Natural killer cell (primary cell): ENCODE measurements at regions of chr7 and their contacts with region 1.

Region 1: GRCh38 chr7:16420649-16421332 is 547 bp downstream of the CRPPA start:
- DNase-seq: peak; percentile 75 to 95
- ATAC-seq: peak; percentile 89 to 93 (median 89)
- H3K4me3 ChIP-seq: peak overlapping the region; percentile 50
- H3K4me3 Mint-ChIP-seq: peak overlapping the region; percentile 92
- H3K27ac ChIP-seq: peak overlapping the region; percentile 77
- H3K27ac Mint-ChIP-seq: peak overlapping the region; percentile 85 to 91
- H3K4me1 ChIP-seq: peaks cover 15% of the 10 kb centered on the region
- H3K4me1 Mint-ChIP-seq: peaks cover 17 to 21% of the 10 kb centered on the region in 2 donors
- H3K27me3 ChIP-seq: no peaks in the 10 kb centered on the region
- H3K27me3 Mint-ChIP-seq: peaks cover 0 to under 1% of the 10 kb centered on the region in 2 donors
- CTCF ChIP-seq: peak; percentile 14

Region 2: GRCh38 chr7:16284581-16284980 is 136.2 kb before region 1 on chr7:
- intact Hi-C with region 1: no loop called
- DNase-seq: no peak
- ATAC-seq: no peak
- H3K4me3 ChIP-seq: no peak overlapping the region
- H3K4me3 Mint-ChIP-seq: no peak overlapping the region
- H3K27ac ChIP-seq: no peak overlapping the region
- H3K27ac Mint-ChIP-seq: no peak overlapping the region
- H3K4me1 ChIP-seq: no peaks in the 10 kb centered on the region
- H3K4me1 Mint-ChIP-seq: no peaks in the 10 kb centered on the region
- H3K27me3 ChIP-seq: no peaks in the 10 kb centered on the region
- H3K27me3 Mint-ChIP-seq: no peaks in the 10 kb centered on the region
- CTCF ChIP-seq: no peak

Region 3: DNA sequence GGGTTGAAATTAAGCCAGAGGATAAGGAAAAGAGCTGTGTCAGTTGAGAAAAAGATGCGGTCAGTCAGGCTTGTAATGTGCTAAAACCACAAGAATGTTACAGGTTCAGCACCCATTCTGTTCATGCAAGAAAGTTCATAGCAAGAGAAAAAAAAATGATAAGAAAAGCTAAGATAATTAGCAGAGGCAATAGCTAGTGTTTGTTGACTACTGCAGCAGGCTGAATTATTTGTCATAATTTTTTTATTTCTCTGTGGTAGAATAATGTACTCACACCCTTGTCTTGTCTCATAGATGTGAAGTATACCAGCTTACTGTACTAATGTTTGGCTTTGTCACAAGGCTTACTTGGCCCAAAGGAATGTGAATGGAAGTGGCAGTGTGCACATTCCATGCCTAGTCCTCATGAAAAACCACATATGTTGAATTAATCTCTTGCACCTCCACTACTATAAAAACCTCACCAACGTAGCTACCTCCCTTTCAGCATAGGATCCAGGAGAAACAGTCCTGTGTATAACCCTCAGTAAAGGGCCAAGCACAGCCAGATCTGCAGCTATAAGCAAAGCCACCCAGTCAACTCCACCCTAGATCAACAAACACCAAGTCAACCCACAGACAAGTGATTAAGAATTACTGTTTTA is 74.3 kb before region 1 on chr7:
- intact Hi-C with region 1: loop called (anchors 2 kb)
- DNase-seq: peak in 1 of 2 donors; percentile 44
- ATAC-seq: peak; percentile 78 to 89 (median 78)
- H3K4me3 ChIP-seq: no peak overlapping the region
- H3K4me3 Mint-ChIP-seq: peak overlapping the region; percentile 32
- H3K27ac ChIP-seq: no peak overlapping the region
- H3K27ac Mint-ChIP-seq: peak overlapping the region; percentile 0 to 5
- H3K4me1 ChIP-seq: peaks cover 8% of the 10 kb centered on the region
- H3K4me1 Mint-ChIP-seq: peaks cover 34 to 40% of the 10 kb centered on the region in 2 donors
- H3K27me3 ChIP-seq: no peaks in the 10 kb centered on the region
- H3K27me3 Mint-ChIP-seq: peaks cover 0 to 7% of the 10 kb centered on the region in 2 donors
- CTCF ChIP-seq: no peak

Region 4: DNA sequence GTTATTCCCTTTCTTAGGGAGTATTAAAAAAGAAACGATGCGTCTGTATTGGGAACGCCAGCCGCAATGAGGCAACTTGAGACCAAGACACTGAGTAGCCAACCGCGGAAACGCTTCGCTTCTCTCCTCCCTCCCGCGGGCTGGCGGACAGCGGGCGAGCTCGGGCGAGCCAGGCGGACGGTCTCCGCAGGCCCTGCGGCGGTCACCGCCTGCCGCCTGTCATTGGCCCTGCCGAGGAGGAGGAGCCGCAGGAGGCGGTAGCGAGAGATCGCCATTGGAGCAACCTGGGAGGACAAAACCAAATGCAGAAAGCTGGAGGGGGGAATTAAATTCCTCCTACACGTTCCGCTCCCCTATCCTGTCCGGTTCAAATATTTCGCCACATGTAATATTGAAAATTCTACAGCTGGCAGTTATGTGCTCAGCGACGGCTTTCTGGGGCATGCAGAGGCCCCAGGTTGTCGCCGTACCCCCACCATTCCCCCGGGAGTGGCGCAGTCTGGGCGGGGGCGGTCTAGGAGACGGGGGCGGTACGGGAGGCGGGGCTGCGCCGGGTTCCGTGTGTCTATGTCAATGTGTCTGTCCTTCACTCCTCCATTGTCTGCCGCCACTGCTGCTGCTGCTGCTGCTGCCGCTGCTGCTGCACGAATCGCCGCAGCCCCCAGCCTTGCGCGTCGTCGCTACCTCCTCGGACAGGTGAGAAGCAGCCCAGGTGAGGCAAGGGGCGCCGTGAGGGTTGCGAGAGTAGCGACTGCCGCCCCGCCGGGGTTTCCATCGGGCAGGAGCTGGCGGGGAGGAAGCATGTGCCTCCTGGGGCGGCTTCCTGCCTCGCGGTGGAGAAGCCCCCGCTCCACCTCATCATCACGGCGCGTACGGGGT is 225.0 kb after region 1 on chr7 and contains the starts of genes ANKMY2 and BZW2:
- intact Hi-C with region 1: loop called (anchors 2 kb)
- DNase-seq: peak; percentile 93 to 96
- ATAC-seq: peak; percentile 85 to 97 (median 90)
- H3K4me3 ChIP-seq: peak within 1 kb of the TSS; percentile 76
- H3K4me3 Mint-ChIP-seq: peak within 1 kb of the TSS; percentile 99
- H3K27ac ChIP-seq: peak within 1 kb of the TSS; percentile 92
- H3K27ac Mint-ChIP-seq: peak within 1 kb of the TSS; percentile 94 to 96
- H3K4me1 ChIP-seq: peaks cover 21% of the 10 kb centered on the region
- H3K4me1 Mint-ChIP-seq: peaks cover 60 to 70% of the 10 kb centered on the region in 2 donors
- H3K27me3 ChIP-seq: no peaks in the 10 kb centered on the region
- H3K27me3 Mint-ChIP-seq: no peaks in the 10 kb centered on the region
- CTCF ChIP-seq: no peak
- total RNA-seq, gene ANKMY2: 15.5 to 21.4 (median 19.4) TPM
- total RNA-seq, gene BZW2: 15.3 to 21.0 (median 19.9) TPM